ENCODE measurements at regions of chr19 and their contacts with region 1.

Region 1: GRCh38 chr19:36136964-36137686 is 2.7 kb upstream of the CAPNS1 start:
- DNase-seq: peak; percentile 96
- H3K4me3 Mint-ChIP-seq: peak overlapping the region; percentile 62
- H3K27ac Mint-ChIP-seq: peak overlapping the region; percentile 88
- H3K4me1 Mint-ChIP-seq: peaks cover 52% of the 10 kb centered on the region
- H3K27me3 Mint-ChIP-seq: no peaks in the 10 kb centered on the region
- CTCF ChIP-seq: no peak

Region 2: GRCh38 chr19:36114763-36115452 is 22.2 kb before region 1 on chr19 and contains the start of gene POLR2I:
- CTCF ChIA-PET with region 1: interaction called, 7 read pairs
- intact Hi-C with region 1: loop called (anchors 1 kb)
- DNase-seq: peak; percentile 99
- H3K4me3 Mint-ChIP-seq: peak within 1 kb of the TSS; percentile 90
- H3K27ac Mint-ChIP-seq: peak within 1 kb of the TSS; percentile 99
- H3K4me1 Mint-ChIP-seq: peaks cover 38% of the 10 kb centered on the region
- H3K27me3 Mint-ChIP-seq: peaks cover 12% of the 10 kb centered on the region
- CTCF ChIP-seq: no peak
- total RNA-seq, gene POLR2I: 91.6 and 92.2 TPM in 2 replicates

Region 3: GRCh38 chr19:36182612-36183244 is 45.6 kb after region 1 on chr19:
- CTCF ChIA-PET with region 1: no interaction called
- intact Hi-C with region 1: no loop called
- DNase-seq: no peak
- H3K4me3 Mint-ChIP-seq: no peak overlapping the region
- H3K27ac Mint-ChIP-seq: no peak overlapping the region
- H3K4me1 Mint-ChIP-seq: no peaks in the 10 kb centered on the region
- H3K27me3 Mint-ChIP-seq: no peaks in the 10 kb centered on the region
- CTCF ChIP-seq: no peak

Measured in Calu3 (cell line).